ENCODE measurements at regions of chr7 and their contacts with region 1.

Region 1: DNA sequence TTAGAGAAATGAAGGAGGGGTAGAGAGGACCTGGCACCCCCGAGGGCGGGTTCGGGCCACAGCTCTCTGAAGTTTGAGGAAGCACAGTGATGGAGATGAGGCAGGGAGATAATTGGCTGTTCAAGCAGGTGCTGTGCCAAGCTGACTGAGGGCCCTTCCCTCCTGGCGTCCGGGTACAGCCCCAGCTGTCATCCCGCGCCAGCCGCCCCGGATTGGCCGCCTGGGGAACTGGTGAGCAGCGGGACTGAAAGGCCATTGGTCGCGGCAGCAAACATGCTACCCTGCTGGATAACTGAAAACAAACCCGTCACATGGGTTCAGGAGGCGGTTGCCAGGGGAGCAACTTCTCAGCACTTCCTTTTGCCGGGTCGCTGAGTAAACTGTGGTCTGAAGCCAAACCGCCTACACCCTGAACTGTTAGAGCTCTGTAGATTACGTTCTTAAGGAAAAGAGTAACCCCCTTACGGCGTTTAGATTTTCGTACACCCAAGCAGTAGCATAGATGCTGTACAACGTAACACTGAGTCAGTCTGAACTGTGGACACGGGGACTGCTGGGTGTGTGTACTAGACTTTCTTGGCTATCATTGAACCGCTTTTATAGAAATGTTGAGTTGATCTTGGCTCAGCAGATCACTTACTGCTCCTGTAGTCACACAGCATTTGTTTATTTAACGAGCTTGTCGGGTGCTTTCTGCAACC is 1.3 kb downstream of the INSIG1 start:
- DNase-seq: peak; percentile 97
- H3K4me3 ChIP-seq: peak overlapping the region; percentile 41 to 68 (median 59)
- H3K27ac ChIP-seq: peak overlapping the region; percentile 83
- H3K4me1 ChIP-seq: peaks cover 20% of the 10 kb centered on the region
- H3K27me3 ChIP-seq: no peaks in the 10 kb centered on the region
- CTCF ChIP-seq: no peak

Region 2: GRCh38 chr7:154620141-154620755 is 678.7 kb before region 1 on chr7:
- CTCF ChIA-PET with region 1: no interaction called
- dilution Hi-C with region 1: no loop called
- in situ Hi-C with region 1: no loop called
- intact Hi-C with region 1: no loop called
- DNase-seq: no peak
- H3K4me3 ChIP-seq: no peak overlapping the region
- H3K27ac ChIP-seq: no peak overlapping the region
- H3K4me1 ChIP-seq: no peaks in the 10 kb centered on the region
- H3K27me3 ChIP-seq: no peaks in the 10 kb centered on the region
- CTCF ChIP-seq: no peak

Region 3: GRCh38 chr7:154913638-154914312 is 385.2 kb before region 1 on chr7:
- CTCF ChIA-PET with region 1: interaction called, 16 read pairs
- dilution Hi-C with region 1: no loop called
- in situ Hi-C with region 1: no loop called
- intact Hi-C with region 1: loop called (anchors 5 kb)
- DNase-seq: peak; percentile 60
- H3K4me3 ChIP-seq: peak overlapping the region in 1 of 3 experiments; percentile 30
- H3K27ac ChIP-seq: no peak overlapping the region
- H3K4me1 ChIP-seq: peaks cover 4% of the 10 kb centered on the region
- H3K27me3 ChIP-seq: no peaks in the 10 kb centered on the region
- CTCF ChIP-seq: peak; percentile 74 to 96

Region 4: GRCh38 chr7:155190688-155191087 is 108.3 kb before region 1 on chr7:
- CTCF ChIA-PET with region 1: no interaction called
- dilution Hi-C with region 1: no loop called
- in situ Hi-C with region 1: loop called in 1 of 2 experiments (anchors 25 kb)
- intact Hi-C with region 1: loop called (anchors 1 kb)
- DNase-seq: no peak
- H3K4me3 ChIP-seq: peak overlapping the region in 1 of 3 experiments; percentile 0
- H3K27ac ChIP-seq: no peak overlapping the region
- H3K4me1 ChIP-seq: no peaks in the 10 kb centered on the region
- H3K27me3 ChIP-seq: no peaks in the 10 kb centered on the region
- CTCF ChIP-seq: peak; percentile 81 to 94

Region 5: DNA sequence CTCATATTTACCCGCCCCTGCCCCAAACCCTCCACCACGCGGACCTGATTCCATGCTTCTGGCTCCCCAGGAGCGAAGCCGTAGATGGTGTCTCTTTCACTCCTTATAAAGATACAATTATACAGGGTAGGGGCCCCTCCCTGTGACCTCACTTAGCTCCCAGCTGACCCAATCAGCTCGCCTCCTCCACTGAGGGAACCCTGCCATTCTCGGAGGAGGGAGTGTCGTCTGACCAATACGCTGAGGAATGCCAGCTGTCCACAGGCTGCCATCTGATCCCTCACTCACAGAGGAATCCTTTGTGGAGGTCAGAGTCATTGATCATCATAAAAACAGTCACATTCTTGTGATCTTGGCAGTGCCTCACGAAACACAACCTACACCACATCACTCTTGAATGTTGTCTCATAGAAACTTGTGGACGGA is 68.8 kb before region 1 on chr7:
- CTCF ChIA-PET with region 1: no interaction called
- dilution Hi-C with region 1: no loop called
- in situ Hi-C with region 1: no loop called
- intact Hi-C with region 1: loop called (anchors 2 kb)
- DNase-seq: peak; percentile 100
- H3K4me3 ChIP-seq: no peak overlapping the region
- H3K27ac ChIP-seq: peak overlapping the region; percentile 85
- H3K4me1 ChIP-seq: peaks cover 7% of the 10 kb centered on the region
- H3K27me3 ChIP-seq: no peaks in the 10 kb centered on the region
- CTCF ChIP-seq: no peak

Region 6: GRCh38 chr7:155344600-155345433 is 45.8 kb after region 1 on chr7:
- CTCF ChIA-PET with region 1: no interaction called
- dilution Hi-C with region 1: no loop called
- in situ Hi-C with region 1: no loop called
- intact Hi-C with region 1: loop called (anchors 2 kb)
- DNase-seq: peak; percentile 41
- H3K4me3 ChIP-seq: peak overlapping the region in 2 of 3 experiments; percentile 36 to 54
- H3K27ac ChIP-seq: no peak overlapping the region
- H3K4me1 ChIP-seq: no peaks in the 10 kb centered on the region
- H3K27me3 ChIP-seq: no peaks in the 10 kb centered on the region
- CTCF ChIP-seq: peak; percentile 56 to 70

Region 7: DNA sequence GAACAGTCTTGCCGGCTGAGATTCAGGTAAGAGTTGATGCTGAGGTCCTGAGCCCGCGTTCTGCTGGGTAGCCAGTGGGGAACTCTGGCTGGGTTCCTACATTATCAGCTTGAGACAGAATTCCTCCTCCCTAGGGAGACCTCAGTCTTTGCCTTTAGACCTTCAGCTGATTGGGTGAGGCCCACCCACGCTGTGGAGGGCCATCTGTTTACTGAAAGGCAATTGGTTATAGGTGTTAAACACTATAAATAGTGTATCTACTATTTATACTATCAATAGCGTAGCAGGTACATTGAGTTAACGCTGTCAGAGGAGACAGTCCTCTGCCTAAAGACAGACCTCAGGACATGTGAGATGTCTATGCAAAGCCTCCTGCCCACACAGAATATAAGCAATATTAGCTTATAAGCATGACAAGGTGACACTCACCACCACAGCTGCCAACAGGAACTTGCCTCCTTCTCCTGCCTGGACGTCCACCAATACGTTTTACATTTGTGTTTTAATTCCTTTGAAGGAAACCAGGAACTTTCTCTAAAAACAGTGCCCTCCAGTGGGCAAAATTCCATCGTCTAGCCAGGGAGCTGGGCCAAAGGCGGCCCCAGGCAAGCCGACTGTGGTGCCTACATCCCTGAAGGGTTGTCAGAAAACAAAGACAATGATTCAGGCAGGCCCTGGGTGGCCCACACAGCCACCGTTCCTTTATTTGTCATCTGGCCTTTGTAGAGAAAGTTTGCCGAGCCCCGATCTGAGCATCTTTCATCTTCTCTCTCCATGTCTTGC is 57.5 kb after region 1 on chr7:
- CTCF ChIA-PET with region 1: no interaction called
- dilution Hi-C with region 1: no loop called
- in situ Hi-C with region 1: no loop called
- intact Hi-C with region 1: no loop called
- DNase-seq: peak; percentile 20
- H3K4me3 ChIP-seq: no peak overlapping the region
- H3K27ac ChIP-seq: no peak overlapping the region
- H3K4me1 ChIP-seq: no peaks in the 10 kb centered on the region
- H3K27me3 ChIP-seq: peaks cover under 1% of the 10 kb centered on the region
- CTCF ChIP-seq: peak; percentile 31 to 36

Measured in mammary epithelial cell (primary cell).